CD4-positive, alpha-beta memory T cell (primary cell): ENCODE measurements at regions of chr14 and their contacts with region 1.

Region 1: GRCh38 chr14:89954070-89955028 is at the start of gene EFCAB11:
- DNase-seq: peak; percentile 96 to 98 (median 98)
- H3K4me3 ChIP-seq: peak within 1 kb of the TSS; percentile 62 to 90
- H3K4me3 Mint-ChIP-seq: peak within 1 kb of the TSS; percentile 95 to 98 (median 97)
- H3K27ac ChIP-seq: peak within 1 kb of the TSS; percentile 97
- H3K27ac Mint-ChIP-seq: peak within 1 kb of the TSS; percentile 88 to 97 (median 96)
- H3K4me1 ChIP-seq: peaks cover 30% of the 10 kb centered on the region
- H3K4me1 Mint-ChIP-seq: peaks cover 27 to 49% (median 38%) of the 10 kb centered on the region in 4 donors
- H3K27me3 ChIP-seq: no peaks in the 10 kb centered on the region
- H3K27me3 Mint-ChIP-seq: no peaks in the 10 kb centered on the region
- total RNA-seq, gene EFCAB11: 1.3 to 2.5 TPM

Region 2: DNA sequence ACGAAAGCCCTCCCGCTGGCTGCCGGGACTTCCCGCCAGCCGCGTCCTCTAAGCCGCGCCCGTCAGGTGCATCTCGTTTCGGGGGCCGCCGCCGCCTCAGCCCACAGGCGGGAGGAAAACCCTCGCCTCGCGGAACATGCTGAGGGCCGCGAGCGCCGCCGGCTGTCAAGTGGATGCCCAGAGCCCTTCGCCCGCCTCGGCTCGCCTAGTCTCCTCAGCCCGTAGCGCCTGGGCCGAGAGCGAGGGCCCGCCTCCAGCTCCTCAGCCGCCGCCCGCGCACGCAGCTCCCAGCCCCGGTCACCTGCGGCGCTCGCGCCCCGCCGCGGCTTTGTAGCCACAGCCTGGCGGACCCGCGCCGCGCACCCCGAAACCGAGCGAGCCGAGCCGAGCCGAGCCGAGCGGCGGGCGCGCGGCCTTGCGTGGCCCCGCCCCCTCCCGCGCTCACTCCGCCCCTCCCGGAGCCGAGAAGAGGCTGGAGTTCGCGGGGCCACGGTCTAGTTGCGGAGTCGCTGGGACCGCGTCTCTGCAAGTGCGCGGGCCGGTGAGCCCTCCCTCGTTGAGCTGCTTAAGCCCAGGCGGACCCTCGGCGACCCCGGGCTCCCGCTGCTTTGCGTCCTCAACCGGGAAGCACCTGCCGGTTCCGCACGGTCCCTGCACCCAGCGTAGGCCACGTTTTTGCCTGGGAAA is 1161.6 kb before region 1 on chr14 and contains the start of gene EML5:
- CTCF ChIA-PET with region 1: no interaction called
- POLR2A ChIA-PET with region 1: no interaction called
- intact Hi-C with region 1: loop called (anchors 10 kb)
- DNase-seq: peak; percentile 82 to 86 (median 86)
- H3K4me3 ChIP-seq: peak within 1 kb of the TSS; percentile 57 to 86
- H3K4me3 Mint-ChIP-seq: peak within 1 kb of the TSS; percentile 87 to 93 (median 92)
- H3K27ac ChIP-seq: peak within 1 kb of the TSS; percentile 63
- H3K27ac Mint-ChIP-seq: peak within 1 kb of the TSS; percentile 77 to 91 (median 87)
- H3K4me1 ChIP-seq: peaks cover 22% of the 10 kb centered on the region
- H3K4me1 Mint-ChIP-seq: peaks cover 8 to 23% (median 13%) of the 10 kb centered on the region in 4 donors
- H3K27me3 ChIP-seq: no peaks in the 10 kb centered on the region
- H3K27me3 Mint-ChIP-seq: peaks cover 0 to 2% of the 10 kb centered on the region in 2 donors
- total RNA-seq, gene EML5: 5.5 to 5.6 TPM

Region 3: DNA sequence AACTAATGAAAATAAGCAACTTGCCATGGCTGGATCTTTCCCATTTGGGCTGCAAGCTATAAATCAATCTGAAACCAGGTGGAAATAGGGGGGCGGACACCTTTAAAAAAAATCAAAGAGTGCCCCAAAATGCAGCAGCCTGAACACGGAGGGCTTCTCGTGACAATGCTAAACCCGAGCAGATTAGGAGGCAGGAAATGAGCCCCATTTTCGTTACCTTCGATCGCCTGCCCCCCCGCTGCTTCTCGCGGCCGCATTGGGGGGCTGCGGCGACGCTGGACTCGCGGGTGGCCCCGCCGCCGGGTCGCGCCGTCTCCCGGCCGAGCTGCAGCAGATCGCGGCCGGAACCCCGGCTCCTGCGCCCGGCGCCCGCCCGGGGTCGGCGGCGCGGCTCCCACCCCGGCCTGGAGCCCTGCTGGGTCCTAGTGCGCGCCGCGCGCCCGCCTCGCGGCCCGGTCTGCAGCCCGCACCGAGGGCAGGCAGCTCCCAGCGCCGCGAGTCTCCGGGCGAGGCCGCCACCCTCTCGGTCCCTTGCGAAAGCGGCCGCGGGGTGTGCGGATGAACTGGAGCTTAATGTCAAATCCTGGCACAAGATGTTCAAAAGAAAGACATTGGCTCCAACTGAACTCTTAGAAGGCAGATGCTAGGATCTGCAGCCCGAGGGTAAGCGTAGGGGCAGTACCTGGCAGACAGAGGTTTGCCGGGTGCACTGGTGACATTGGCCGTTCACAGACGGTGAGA is 335.4 kb before region 1 on chr14:
- CTCF ChIA-PET with region 1: no interaction called
- POLR2A ChIA-PET with region 1: interaction called, 3 read pairs
- intact Hi-C with region 1: loop called (anchors 1 kb)
- DNase-seq: peak; percentile 75 to 84 (median 78)
- H3K4me3 ChIP-seq: peak overlapping the region; percentile 49 to 90
- H3K4me3 Mint-ChIP-seq: peak overlapping the region; percentile 94 to 99 (median 97)
- H3K27ac ChIP-seq: peak overlapping the region; percentile 80
- H3K27ac Mint-ChIP-seq: peak overlapping the region; percentile 91 to 98 (median 96)
- H3K4me1 ChIP-seq: peaks cover 60% of the 10 kb centered on the region
- H3K4me1 Mint-ChIP-seq: peaks cover 48 to 80% (median 63%) of the 10 kb centered on the region in 4 donors
- H3K27me3 ChIP-seq: no peaks in the 10 kb centered on the region
- H3K27me3 Mint-ChIP-seq: no peaks in the 10 kb centered on the region

Region 4: DNA sequence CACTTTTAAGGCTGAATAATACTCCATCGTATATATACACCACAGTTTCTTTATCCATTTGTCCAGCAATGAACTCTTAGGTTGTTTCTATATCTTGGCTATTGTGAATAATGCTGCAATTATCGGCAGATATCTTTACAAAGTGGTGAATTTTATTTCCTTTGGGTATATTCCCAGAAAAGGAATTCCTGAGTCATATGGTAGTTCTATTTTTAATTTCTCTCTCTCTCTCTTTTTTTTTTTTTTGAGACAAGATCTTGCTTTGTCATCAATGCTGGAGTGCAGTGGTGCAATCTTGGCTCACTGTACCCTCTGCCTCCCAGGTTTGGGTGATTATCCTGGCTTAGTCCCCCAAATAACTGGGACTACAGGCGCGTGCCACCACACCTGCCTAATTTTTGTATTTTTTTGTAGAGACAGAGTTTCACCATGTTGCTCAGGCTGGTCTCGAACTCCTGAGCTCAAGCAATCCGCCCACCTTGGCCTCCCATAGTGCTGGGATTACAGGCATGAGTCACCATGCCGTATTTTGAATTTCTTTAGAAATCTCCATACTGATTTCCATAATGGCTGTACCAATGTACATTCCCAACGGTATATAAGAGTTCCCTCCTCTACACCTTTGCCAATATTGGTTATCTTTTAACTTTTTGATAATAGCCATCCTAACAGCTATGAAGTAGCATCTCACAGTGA is 98.2 kb before region 1 on chr14:
- CTCF ChIA-PET with region 1: no interaction called
- POLR2A ChIA-PET with region 1: no interaction called
- intact Hi-C with region 1: no loop called
- DNase-seq: no peak
- H3K4me3 ChIP-seq: no peak overlapping the region
- H3K4me3 Mint-ChIP-seq: no peak overlapping the region
- H3K27ac ChIP-seq: no peak overlapping the region
- H3K27ac Mint-ChIP-seq: no peak overlapping the region
- H3K4me1 ChIP-seq: no peaks in the 10 kb centered on the region
- H3K4me1 Mint-ChIP-seq: no peaks in the 10 kb centered on the region
- H3K27me3 ChIP-seq: no peaks in the 10 kb centered on the region
- H3K27me3 Mint-ChIP-seq: peaks cover 0 to 3% of the 10 kb centered on the region in 2 donors

Region 5: GRCh38 chr14:89965839-89966238 is 11.5 kb after region 1 on chr14:
- CTCF ChIA-PET with region 1: interaction called, 52 read pairs
- POLR2A ChIA-PET with region 1: interaction called, 11 read pairs
- intact Hi-C with region 1: no loop called
- DNase-seq: no peak
- H3K4me3 ChIP-seq: no peak overlapping the region
- H3K4me3 Mint-ChIP-seq: no peak overlapping the region
- H3K27ac ChIP-seq: no peak overlapping the region
- H3K27ac Mint-ChIP-seq: no peak overlapping the region
- H3K4me1 ChIP-seq: peaks cover 4% of the 10 kb centered on the region
- H3K4me1 Mint-ChIP-seq: peaks cover 9 to 43% (median 16%) of the 10 kb centered on the region in 4 donors
- H3K27me3 ChIP-seq: no peaks in the 10 kb centered on the region
- H3K27me3 Mint-ChIP-seq: no peaks in the 10 kb centered on the region

Region 6: GRCh38 chr14:90331497-90332435 is 377.4 kb after region 1 on chr14 and contains the start of gene NRDE2:
- CTCF ChIA-PET with region 1: no interaction called
- POLR2A ChIA-PET with region 1: no interaction called
- intact Hi-C with region 1: loop called (anchors 1 kb)
- DNase-seq: peak; percentile 85 to 87 (median 86)
- H3K4me3 ChIP-seq: peak within 1 kb of the TSS; percentile 63 to 92
- H3K4me3 Mint-ChIP-seq: peak within 1 kb of the TSS; percentile 90 to 96 (median 93)
- H3K27ac ChIP-seq: peak within 1 kb of the TSS; percentile 70
- H3K27ac Mint-ChIP-seq: peak within 1 kb of the TSS; percentile 91 to 97 (median 96)
- H3K4me1 ChIP-seq: peaks cover 15% of the 10 kb centered on the region
- H3K4me1 Mint-ChIP-seq: peaks cover 14 to 38% (median 31%) of the 10 kb centered on the region in 4 donors
- H3K27me3 ChIP-seq: no peaks in the 10 kb centered on the region
- H3K27me3 Mint-ChIP-seq: peaks cover 7% of the 10 kb centered on the region in 2 donors
- total RNA-seq, gene NRDE2: 26.3 to 32.6 TPM

Region 7: DNA sequence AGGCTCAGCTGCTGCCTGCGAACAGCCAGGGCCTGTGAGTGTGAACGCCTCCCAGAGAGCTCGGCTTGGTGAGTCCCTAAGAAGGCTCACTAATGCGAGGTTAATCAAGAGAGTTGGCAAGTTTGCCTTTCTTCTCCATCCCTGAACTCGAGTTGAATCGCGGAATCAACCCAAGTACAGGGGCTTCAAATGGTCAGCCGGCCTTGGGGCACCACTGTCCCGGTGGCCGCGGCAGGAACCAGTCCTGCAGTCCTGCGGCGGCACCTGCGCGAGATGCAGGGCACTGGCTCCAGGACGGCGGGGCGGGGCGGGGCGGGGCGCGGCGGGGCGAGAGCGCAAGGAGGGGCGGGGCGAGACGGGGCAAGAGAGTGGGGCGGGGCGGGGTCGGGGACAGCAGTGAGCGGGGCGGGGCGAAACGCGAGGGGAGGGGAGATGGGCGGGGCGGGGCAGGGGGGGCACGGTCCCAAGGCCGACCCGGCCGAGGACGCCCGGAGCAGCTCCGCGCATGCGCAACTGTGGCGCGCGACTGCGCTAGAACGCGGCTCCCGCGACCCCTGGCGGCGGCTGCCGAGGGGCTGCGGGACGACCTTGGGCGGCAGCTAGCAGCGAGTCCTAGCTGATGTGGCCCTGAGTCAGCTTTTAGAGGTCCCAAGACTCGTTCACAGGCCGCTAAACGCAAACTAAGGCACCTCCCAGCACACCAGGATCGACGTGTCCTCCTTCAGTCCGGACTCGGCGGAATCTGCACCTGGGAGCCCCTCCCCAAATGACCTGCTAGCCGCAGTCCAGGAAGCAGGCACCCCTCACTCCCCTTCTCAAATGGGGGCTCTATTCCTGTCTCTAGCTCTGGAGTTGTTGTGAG is 803.9 kb after region 1 on chr14:
- CTCF ChIA-PET with region 1: no interaction called
- POLR2A ChIA-PET with region 1: interaction called, 6 read pairs
- intact Hi-C with region 1: loop called (anchors 10 kb)
- DNase-seq: peak; percentile 88 to 95 (median 93)
- H3K4me3 ChIP-seq: peak overlapping the region; percentile 58 to 69
- H3K4me3 Mint-ChIP-seq: peak overlapping the region; percentile 86 to 94 (median 88)
- H3K27ac ChIP-seq: peak overlapping the region; percentile 55
- H3K27ac Mint-ChIP-seq: peak overlapping the region; percentile 87 to 96 (median 94)
- H3K4me1 ChIP-seq: peaks cover 18% of the 10 kb centered on the region
- H3K4me1 Mint-ChIP-seq: peaks cover 7 to 23% (median 12%) of the 10 kb centered on the region in 4 donors
- H3K27me3 ChIP-seq: no peaks in the 10 kb centered on the region
- H3K27me3 Mint-ChIP-seq: peaks cover 3 to 5% of the 10 kb centered on the region in 2 donors